ENCODE measurements at regions of chr11 and their contacts with region 1.

Region 1: DNA sequence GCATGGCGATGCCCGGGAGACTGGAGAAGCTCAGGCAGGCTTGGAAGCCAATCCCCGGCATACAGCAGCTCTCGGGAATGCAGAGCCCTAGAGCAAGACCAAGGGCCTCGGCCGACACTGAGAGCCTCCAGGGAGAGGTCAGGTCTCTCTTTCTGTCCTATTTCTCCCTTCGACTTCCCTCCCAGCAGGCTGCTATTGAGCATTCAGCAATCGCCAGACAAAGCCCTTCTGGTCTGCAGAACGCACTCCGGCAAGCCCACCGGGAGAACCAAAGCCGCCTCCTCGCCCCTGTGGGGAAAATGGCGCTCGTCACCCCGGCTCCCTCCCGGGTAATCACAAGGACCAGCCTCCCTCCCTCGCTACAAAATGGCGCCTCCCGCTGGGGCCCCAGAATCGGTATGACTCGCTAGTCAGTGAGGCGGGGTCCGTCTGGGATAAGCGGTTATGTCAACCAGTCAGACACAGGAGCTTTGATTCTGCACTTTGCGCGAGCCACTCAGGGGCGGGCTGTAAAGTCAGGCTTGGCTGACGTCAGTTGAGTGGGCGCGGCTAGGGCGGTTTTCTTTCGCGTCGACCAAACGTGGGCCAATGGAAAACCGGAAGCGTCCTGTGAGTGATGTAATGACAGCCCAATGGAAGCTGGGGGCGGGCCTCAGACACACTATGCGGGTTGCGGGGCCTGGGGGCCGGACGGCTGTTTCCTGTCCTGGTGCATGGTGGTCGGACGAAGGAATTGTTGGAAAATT is at the start of gene ZNF143:
- DNase-seq: peak; percentile 99
- H3K4me3 ChIP-seq: peak within 1 kb of the TSS; percentile 90
- CTCF ChIP-seq: no peak

Region 2: GRCh38 chr11:9025101-9025850 is 435.2 kb before region 1 on chr11:
- CTCF ChIA-PET with region 1: no interaction called
- POLR2A ChIA-PET with region 1: no interaction called
- DNase-seq: no peak
- H3K4me3 ChIP-seq: no peak overlapping the region
- CTCF ChIP-seq: no peak

Region 3: DNA sequence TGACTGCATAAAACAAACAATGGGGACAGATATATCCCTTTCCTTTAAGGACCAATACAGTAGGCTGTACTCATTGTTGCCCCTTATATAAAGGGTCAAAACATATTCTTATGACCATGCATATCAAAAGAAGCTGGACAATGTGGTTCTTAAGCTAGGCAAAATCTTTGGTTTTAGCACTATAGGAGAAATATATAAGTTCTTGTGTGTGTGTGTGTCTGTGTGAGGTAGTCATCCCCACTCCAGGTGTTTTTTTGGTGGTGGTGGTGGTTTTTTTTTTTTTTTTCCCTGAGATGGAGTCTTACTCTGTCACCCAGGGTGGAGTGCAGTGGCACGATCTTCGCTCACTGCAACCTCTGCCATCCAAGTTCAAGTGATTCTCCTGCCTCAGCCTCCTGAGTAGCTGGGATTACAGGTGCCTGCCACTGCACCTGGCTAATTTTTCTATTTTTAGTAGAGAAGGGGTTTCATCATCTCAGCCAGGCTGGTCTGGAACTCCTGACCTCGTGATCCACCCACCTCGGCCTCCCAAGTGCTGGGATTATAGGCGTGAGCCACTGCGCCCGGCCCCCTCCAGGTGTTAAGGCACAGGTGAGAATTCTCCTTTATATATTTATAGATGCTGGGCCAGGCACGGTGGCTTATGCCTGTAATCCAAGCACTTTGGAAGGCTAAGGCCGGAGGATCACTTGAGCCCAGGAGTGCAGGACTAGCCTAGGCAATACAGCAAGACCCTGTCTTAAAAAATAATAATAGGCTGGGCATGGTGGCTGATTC is 11.7 kb before region 1 on chr11:
- CTCF ChIA-PET with region 1: interaction called, 3 read pairs
- POLR2A ChIA-PET with region 1: interaction called, 10 read pairs
- DNase-seq: no peak
- H3K4me3 ChIP-seq: no peak overlapping the region
- CTCF ChIP-seq: no peak

Region 4: GRCh38 chr11:9489080-9489765 is 28.7 kb after region 1 on chr11:
- CTCF ChIA-PET with region 1: interaction called, 4 read pairs
- POLR2A ChIA-PET with region 1: interaction called, 16 read pairs
- DNase-seq: peak; percentile 33
- H3K4me3 ChIP-seq: peak overlapping the region; percentile 21
- CTCF ChIP-seq: no peak

Region 5: DNA sequence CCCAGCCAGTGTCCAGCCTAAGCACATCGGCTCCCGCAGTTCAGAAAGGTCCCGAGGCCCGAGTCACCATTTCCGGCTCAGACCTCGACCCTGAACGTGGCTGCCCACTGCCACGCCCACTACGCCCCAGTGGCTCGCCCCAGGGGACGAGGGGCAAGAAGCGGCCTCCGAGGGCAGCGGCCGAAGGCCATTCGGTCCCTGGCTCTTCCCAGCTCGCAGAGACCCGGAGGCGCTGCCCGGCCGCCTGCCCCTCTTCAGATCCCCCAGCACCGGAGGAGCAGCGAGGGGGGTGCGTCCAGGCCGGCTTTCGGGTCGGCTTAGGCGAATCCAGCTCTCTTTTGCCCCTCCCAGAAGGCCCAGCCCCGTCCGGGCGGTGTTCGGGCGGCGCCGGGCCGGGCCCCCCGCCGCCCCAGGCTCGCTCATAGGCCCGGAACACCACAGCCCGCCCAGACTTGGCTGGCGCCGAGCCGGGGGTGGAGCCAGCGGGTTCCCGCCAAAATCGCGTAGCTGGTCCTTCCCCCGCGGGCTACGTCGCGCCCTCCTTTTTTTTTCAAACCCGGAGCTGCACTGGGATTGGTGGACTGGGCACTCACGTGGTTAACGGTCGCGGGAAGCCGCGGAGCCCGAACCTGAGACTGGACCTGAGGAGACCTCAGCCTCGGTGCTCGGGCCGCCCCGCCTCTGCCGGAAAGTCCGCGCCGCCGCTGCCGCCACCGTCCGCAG is 112.7 kb after region 1 on chr11 and contains the start of gene WEE1:
- CTCF ChIA-PET with region 1: no interaction called
- POLR2A ChIA-PET with region 1: interaction called, 14 read pairs
- DNase-seq: peak; percentile 79
- H3K4me3 ChIP-seq: peak within 1 kb of the TSS; percentile 81
- CTCF ChIP-seq: no peak

Region 6: GRCh38 chr11:9594267-9595046 is 134.0 kb after region 1 on chr11:
- CTCF ChIA-PET with region 1: no interaction called
- POLR2A ChIA-PET with region 1: no interaction called
- DNase-seq: no peak
- H3K4me3 ChIP-seq: no peak overlapping the region
- CTCF ChIP-seq: no peak